ENCODE measurements at regions of chr11 and their contacts with region 1.

Region 1: GRCh38 chr11:117817368-117818040 is 7.0 kb downstream of the FXYD2 start:
- DNase-seq: peak; percentile 64
- H3K4me3 ChIP-seq: no peak overlapping the region
- H3K27ac ChIP-seq: no peak overlapping the region
- H3K4me1 ChIP-seq: peaks cover 16% of the 10 kb centered on the region
- CTCF ChIP-seq: peak; percentile 98

Region 2: GRCh38 chr11:117678658-117679406 is 138.7 kb before region 1 on chr11:
- CTCF ChIA-PET with region 1: no interaction called
- POLR2A ChIA-PET with region 1: no interaction called
- intact Hi-C with region 1: no loop called
- DNase-seq: no peak
- H3K4me3 ChIP-seq: no peak overlapping the region
- H3K27ac ChIP-seq: no peak overlapping the region
- H3K4me1 ChIP-seq: no peaks in the 10 kb centered on the region
- CTCF ChIP-seq: no peak

Region 3: GRCh38 chr11:117720061-117720511 is 97.4 kb before region 1 on chr11:
- CTCF ChIA-PET with region 1: no interaction called
- POLR2A ChIA-PET with region 1: no interaction called
- intact Hi-C with region 1: no loop called
- DNase-seq: no peak
- H3K4me3 ChIP-seq: no peak overlapping the region
- H3K27ac ChIP-seq: no peak overlapping the region
- H3K4me1 ChIP-seq: no peaks in the 10 kb centered on the region
- CTCF ChIP-seq: no peak

Region 4: GRCh38 chr11:117786135-117786890 is 31.2 kb before region 1 on chr11:
- CTCF ChIA-PET with region 1: no interaction called
- POLR2A ChIA-PET with region 1: no interaction called
- intact Hi-C with region 1: no loop called
- DNase-seq: no peak
- H3K4me3 ChIP-seq: no peak overlapping the region
- H3K27ac ChIP-seq: no peak overlapping the region
- H3K4me1 ChIP-seq: no peaks in the 10 kb centered on the region
- CTCF ChIP-seq: no peak

Region 5: GRCh38 chr11:117985953-117986887 is 168.7 kb after region 1 on chr11 and contains the start of gene IL10RA:
- CTCF ChIA-PET with region 1: no interaction called
- POLR2A ChIA-PET with region 1: no interaction called
- intact Hi-C with region 1: no loop called
- DNase-seq: peak; percentile 92
- H3K4me3 ChIP-seq: peak within 1 kb of the TSS; percentile 78
- H3K27ac ChIP-seq: peak within 1 kb of the TSS; percentile 44
- H3K4me1 ChIP-seq: peaks cover 35% of the 10 kb centered on the region
- CTCF ChIP-seq: peak; percentile 34
- total RNA-seq, gene IL10RA: 8.2 and 15.7 TPM in 2 replicates

Region 6: DNA sequence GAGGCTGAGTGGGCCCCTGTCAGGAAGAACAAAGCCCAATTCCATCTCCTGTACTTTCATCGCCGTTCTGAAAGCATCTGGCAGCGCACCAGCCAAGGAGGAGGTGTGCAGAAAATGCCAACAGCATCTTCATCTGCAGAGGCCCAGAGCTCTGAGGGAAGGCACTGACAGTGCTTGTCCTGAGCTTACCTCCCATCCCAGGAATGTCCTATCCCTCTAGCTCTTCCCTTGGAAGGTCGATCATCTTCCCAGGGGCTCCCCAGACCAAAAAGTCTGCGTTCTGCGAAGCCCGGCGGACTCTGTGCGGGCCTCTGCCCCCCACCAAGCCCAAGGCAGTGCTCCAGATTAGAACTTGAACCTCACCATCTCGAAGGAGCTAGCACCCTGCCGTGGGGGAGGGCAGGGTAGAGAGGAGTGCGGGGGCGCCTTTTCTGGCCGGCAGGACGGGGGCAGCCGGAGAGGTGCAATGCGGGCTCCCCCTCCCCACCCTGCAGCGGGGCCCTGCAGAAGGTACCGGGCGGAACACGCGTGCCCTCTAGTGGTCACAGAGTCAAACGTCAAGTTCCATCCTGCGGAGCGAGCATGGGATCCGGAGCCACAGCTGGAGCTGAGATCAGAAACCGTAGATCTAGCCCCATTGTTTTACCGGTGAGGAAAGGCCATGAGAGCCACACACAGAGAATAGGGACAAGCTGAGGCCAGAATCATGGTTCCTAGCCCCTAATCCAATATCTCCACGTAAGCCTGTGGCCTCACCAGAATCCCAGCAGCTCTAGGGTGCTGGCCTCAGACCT is 354.0 kb after region 1 on chr11:
- CTCF ChIA-PET with region 1: no interaction called
- POLR2A ChIA-PET with region 1: no interaction called
- intact Hi-C with region 1: loop called (anchors 10 kb)
- DNase-seq: peak; percentile 76
- H3K4me3 ChIP-seq: no peak overlapping the region
- H3K27ac ChIP-seq: no peak overlapping the region
- H3K4me1 ChIP-seq: peaks cover 8% of the 10 kb centered on the region
- CTCF ChIP-seq: peak; percentile 89

Measured in OCI-LY7 (cell line).